AG04450 (cell line): ENCODE measurements at regions of chr3 and their contacts with region 1.

Region 1: GRCh38 chr3:126197854-126198584 is 17.6 kb upstream of the ALDH1L1 start:
- DNase-seq: peak; percentile 38
- H3K4me3 ChIP-seq: no peak overlapping the region
- H3K27ac ChIP-seq: no peak overlapping the region
- H3K27me3 ChIP-seq: no peaks in the 10 kb centered on the region
- CTCF ChIP-seq: peak; percentile 82

Region 2: GRCh38 chr3:126134219-126134975 is 63.6 kb before region 1 on chr3:
- CTCF ChIA-PET with region 1: interaction called, 19 read pairs
- POLR2A ChIA-PET with region 1: no interaction called
- DNase-seq: peak; percentile 8
- H3K4me3 ChIP-seq: no peak overlapping the region
- H3K27ac ChIP-seq: peak overlapping the region; percentile 11
- H3K27me3 ChIP-seq: peaks cover 21% of the 10 kb centered on the region
- CTCF ChIP-seq: peak; percentile 79

Region 3: DNA sequence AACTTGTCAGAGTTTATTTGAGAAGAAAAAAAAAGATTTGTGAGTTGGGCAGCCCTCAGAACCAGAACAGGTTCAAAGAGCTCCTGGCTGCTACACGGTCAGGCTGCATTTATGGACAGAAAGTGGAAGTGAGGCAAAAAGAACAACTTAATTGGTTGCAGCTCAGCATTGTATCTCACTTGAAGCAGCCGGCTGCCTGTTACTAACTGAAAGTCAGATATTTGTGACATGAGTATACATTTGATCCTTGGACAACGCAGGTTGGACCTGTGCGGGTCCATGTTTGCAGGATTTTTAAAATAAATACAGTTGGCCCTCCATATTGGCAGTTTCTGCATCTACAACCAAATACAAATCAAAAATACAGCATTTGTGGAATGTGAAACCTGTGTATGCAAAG is 10.1 kb before region 1 on chr3:
- CTCF ChIA-PET with region 1: interaction called, 19 read pairs
- POLR2A ChIA-PET with region 1: no interaction called
- DNase-seq: no peak
- H3K4me3 ChIP-seq: no peak overlapping the region
- H3K27ac ChIP-seq: no peak overlapping the region
- H3K27me3 ChIP-seq: peaks cover 30% of the 10 kb centered on the region
- CTCF ChIP-seq: no peak

Region 4: GRCh38 chr3:126212602-126213378 is 14.8 kb after region 1 on chr3:
- CTCF ChIA-PET with region 1: interaction called, 27 read pairs
- POLR2A ChIA-PET with region 1: no interaction called
- DNase-seq: no peak
- H3K4me3 ChIP-seq: peak overlapping the region; percentile 36; the same call in 1 of the 2 replicates
- H3K27ac ChIP-seq: no peak overlapping the region
- H3K27me3 ChIP-seq: no peaks in the 10 kb centered on the region
- CTCF ChIP-seq: peak; percentile 33

Region 5: GRCh38 chr3:126389112-126389793 is 191.2 kb after region 1 on chr3:
- CTCF ChIA-PET with region 1: interaction called, 40 read pairs
- POLR2A ChIA-PET with region 1: no interaction called
- DNase-seq: peak; percentile 23
- H3K4me3 ChIP-seq: peak overlapping the region; percentile 57
- H3K27ac ChIP-seq: no peak overlapping the region
- H3K27me3 ChIP-seq: peaks cover 24% of the 10 kb centered on the region
- CTCF ChIP-seq: peak; percentile 91